Activated CD4-positive, alpha-beta memory T cell treated with anti-CD3 and anti-CD28 coated beads, Interleukin-2, amount 10 ng/mL, durations not matched to agents 7 days and 5 days (primary cell): ENCODE measurements at regions of chr19 and their contacts with region 1.

Region 1: GRCh38 chr19:13774217-13775191 is at the start of gene C19orf53:
- DNase-seq: peak; percentile 91
- H3K4me3 Mint-ChIP-seq: peak within 1 kb of the TSS; percentile 97
- H3K27ac Mint-ChIP-seq: peak within 1 kb of the TSS; percentile 84
- H3K4me1 Mint-ChIP-seq: peaks cover 23% of the 10 kb centered on the region
- H3K27me3 Mint-ChIP-seq: no peaks in the 10 kb centered on the region
- total RNA-seq, gene C19orf53: 79.4 to 83.7 TPM

Region 2: GRCh38 chr19:13689085-13689484 is 85.4 kb before region 1 on chr19:
- CTCF ChIA-PET with region 1: no interaction called
- POLR2A ChIA-PET with region 1: no interaction called
- DNase-seq: peak; percentile 16
- H3K4me3 Mint-ChIP-seq: no peak overlapping the region
- H3K27ac Mint-ChIP-seq: no peak overlapping the region
- H3K4me1 Mint-ChIP-seq: no peaks in the 10 kb centered on the region
- H3K27me3 Mint-ChIP-seq: peaks cover 3% of the 10 kb centered on the region

Region 3: DNA sequence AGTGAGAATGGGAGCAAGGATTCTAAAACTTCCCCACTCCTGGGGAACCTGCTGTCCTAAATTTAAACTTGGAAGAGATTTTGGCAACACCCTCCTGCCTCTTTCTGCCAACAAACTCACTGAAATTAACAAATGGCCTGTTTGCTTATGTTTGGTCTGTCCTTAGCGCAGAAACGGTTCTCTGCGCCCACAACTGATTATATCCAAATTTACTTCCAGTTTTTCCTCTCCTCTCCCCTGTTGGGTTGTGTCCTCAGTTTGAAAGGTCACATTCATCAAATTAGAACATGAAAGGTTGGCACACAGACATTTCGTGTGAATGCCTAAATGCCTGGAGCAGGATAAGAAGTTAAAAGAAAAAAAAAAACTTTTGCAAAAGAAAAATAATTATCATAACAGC is 66.6 kb before region 1 on chr19:
- CTCF ChIA-PET with region 1: no interaction called
- POLR2A ChIA-PET with region 1: no interaction called
- DNase-seq: no peak
- H3K4me3 Mint-ChIP-seq: no peak overlapping the region
- H3K27ac Mint-ChIP-seq: no peak overlapping the region
- H3K4me1 Mint-ChIP-seq: no peaks in the 10 kb centered on the region
- H3K27me3 Mint-ChIP-seq: peaks cover 2% of the 10 kb centered on the region

Region 4: GRCh38 chr19:13718733-13719132 is 55.8 kb before region 1 on chr19:
- CTCF ChIA-PET with region 1: no interaction called
- POLR2A ChIA-PET with region 1: no interaction called
- DNase-seq: no peak
- H3K4me3 Mint-ChIP-seq: no peak overlapping the region
- H3K27ac Mint-ChIP-seq: no peak overlapping the region
- H3K4me1 Mint-ChIP-seq: no peaks in the 10 kb centered on the region
- H3K27me3 Mint-ChIP-seq: peaks cover 10% of the 10 kb centered on the region

Region 5: DNA sequence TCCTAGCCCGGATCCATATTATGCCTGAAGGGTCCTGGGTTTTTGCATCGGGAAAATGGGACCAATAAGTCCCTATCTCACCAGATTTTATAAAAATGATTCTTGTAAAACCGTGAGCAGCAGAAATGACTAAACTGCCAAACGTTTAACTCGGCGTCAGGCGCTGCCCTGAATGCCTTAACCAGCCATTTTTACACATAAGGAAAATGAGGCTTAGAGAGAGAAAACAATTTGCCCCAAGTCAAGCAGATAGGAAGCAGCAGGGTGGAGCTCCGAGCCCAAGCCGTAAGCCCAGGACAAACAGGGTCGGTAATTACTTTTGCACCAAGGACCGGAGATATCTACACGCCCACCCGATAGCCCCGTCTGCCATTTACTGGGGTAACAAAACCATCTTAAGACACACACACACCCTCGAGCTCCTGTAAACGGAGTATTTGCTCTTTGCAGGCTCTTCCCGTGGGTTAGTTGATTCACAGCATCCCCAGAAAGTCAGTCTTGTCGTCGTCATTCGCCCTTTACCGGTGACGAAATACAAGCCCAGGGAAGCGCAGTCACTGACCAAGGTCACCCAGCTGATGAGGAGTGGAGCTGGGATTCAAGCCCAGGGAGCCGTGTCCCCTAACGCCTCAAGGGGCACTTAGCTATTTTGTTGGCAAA is 26.2 kb before region 1 on chr19:
- CTCF ChIA-PET with region 1: interaction called, 6 read pairs
- POLR2A ChIA-PET with region 1: interaction called, 32 read pairs
- DNase-seq: peak; percentile 30
- H3K4me3 Mint-ChIP-seq: peak overlapping the region; percentile 86
- H3K27ac Mint-ChIP-seq: peak overlapping the region; percentile 75
- H3K4me1 Mint-ChIP-seq: peaks cover 28% of the 10 kb centered on the region
- H3K27me3 Mint-ChIP-seq: no peaks in the 10 kb centered on the region

Region 6: DNA sequence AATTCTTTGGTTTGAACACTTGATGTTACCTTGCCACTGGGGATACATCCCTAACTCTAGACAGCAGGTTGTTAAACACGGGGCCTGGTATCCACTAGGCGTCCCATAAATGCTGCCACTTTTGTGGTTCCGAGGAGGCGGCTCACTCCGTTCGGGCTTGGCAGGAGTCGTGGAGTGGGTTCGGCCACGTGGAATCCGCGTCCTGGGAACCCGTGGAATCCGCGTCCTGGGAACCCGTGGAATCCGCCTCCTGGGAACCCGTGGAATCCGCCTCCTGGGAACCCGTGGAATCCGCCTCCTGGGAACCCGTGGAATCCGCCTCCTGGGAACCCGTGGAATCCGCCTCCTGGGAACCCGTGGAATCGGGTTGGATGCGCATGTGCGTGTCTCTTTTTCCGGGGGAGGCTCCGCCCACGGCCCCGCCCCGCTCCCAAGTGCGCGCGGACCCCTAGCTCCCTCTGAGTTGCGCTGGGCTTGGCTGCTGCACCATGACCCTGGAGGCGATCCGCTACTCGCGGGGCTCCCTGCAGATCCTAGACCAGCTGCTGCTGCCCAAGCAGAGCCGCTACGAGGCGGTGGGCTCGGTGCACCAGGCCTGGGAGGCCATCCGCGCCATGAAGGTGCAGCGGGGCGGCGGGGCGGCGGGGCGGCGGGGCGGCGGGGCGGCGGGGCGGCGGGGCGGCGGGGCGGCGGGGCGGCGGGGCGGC is 10.2 kb before region 1 on chr19 and contains the start of gene MRI1:
- CTCF ChIA-PET with region 1: interaction called, 5 read pairs
- POLR2A ChIA-PET with region 1: interaction called, 18 read pairs
- DNase-seq: peak; percentile 44
- H3K4me3 Mint-ChIP-seq: peak within 1 kb of the TSS; percentile 78
- H3K27ac Mint-ChIP-seq: no peak within 1 kb of the TSS
- H3K4me1 Mint-ChIP-seq: peaks cover 12% of the 10 kb centered on the region
- H3K27me3 Mint-ChIP-seq: no peaks in the 10 kb centered on the region
- total RNA-seq, gene MRI1: 22.4 to 22.7 TPM

Region 7: DNA sequence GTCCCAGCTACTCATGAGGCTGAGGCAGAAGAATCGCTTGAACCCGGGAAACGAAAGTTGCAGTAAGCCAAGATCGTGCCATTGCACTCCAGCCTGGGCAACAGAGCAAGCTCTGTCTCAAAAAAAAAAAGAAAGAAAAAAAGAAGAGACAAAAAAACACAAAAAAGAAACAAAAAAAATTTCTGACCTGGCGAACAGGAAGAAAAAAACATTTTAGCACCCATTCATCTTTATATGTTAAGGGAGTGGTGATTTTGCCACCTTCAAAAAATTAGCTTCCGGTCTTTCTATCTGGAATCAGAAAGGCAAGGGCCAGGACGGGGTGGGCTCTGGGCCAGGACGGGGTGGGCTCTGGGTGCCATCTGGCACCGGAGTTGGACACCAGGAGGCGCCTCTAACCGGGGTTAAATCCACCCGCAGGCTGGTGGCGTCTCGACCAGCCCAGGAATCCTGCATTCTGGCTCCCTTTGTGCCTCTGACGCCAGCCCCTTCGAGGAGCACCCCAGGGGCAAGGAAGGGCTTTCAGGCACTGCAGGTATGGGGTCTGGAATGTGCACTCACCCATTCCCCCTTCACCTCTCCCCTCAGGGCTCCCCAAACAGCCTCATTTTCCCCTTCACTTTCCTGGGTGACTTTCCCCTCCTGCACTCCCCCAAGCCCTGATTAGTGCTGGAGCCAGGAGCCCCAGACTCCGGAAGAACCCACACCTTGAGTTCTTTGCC is 10.4 kb after region 1 on chr19:
- CTCF ChIA-PET with region 1: interaction called, 12 read pairs
- POLR2A ChIA-PET with region 1: interaction called, 35 read pairs
- DNase-seq: peak; percentile 77
- H3K4me3 Mint-ChIP-seq: peak overlapping the region; percentile 25
- H3K27ac Mint-ChIP-seq: peak overlapping the region; percentile 56
- H3K4me1 Mint-ChIP-seq: peaks cover 47% of the 10 kb centered on the region
- H3K27me3 Mint-ChIP-seq: no peaks in the 10 kb centered on the region

Region 8: GRCh38 chr19:13794757-13795589 is 20.5 kb after region 1 on chr19 and contains the start of gene ZSWIM4:
- CTCF ChIA-PET with region 1: interaction called, 3 read pairs
- POLR2A ChIA-PET with region 1: interaction called, 35 read pairs
- DNase-seq: peak; percentile 98
- H3K4me3 Mint-ChIP-seq: peak within 1 kb of the TSS; percentile 99
- H3K27ac Mint-ChIP-seq: peak within 1 kb of the TSS; percentile 93
- H3K4me1 Mint-ChIP-seq: peaks cover 35% of the 10 kb centered on the region
- H3K27me3 Mint-ChIP-seq: no peaks in the 10 kb centered on the region
- total RNA-seq, gene ZSWIM4: 10.1 to 10.4 TPM

Region 9: DNA sequence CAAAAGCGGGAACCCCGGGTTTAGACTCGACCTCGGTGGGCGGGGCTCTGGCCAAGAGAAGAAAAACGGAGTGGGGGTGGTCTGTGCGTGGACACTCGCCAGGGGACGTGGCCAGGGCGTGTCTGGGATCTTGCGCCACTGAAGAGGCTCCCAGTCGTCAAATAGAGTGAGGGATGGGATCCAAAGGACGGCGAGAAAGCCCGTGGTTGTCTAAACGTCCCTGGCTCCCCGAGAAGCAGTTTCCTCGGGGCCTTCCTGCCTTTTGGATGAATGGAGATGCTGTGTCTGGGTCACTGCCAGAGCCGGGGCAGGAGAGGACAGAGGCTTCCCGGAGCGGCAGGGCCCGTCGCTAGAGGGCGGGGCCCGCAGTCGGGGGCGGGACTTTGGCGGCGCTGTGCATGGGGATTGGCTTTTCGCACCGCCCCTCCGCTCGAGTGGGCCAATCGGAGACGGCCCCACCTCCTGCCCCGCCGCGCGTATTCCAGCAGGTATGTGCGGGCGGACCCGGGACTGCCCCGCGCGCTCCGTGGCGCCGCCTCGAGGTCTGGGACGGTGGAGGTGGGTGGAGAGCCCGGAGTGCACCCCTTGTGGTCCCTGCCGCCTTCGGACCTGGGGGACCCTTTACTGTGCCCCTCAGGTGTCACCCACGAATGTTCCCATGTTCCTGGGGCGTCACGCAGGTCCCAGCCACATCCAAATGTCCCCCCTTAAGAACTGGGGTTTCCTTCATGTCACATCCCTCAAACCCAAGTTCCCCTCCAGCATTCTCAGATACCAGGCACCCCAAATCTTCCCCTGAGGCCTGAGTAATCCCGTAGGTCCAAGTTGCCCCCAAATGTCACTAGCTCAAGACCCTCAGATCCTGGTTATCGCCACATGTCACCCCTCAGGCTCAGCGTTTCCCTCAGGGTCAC is 59.1 kb after region 1 on chr19:
- CTCF ChIA-PET with region 1: interaction called, 3 read pairs
- POLR2A ChIA-PET with region 1: interaction called, 21 read pairs
- DNase-seq: peak; percentile 94
- H3K4me3 Mint-ChIP-seq: peak overlapping the region; percentile 74
- H3K27ac Mint-ChIP-seq: peak overlapping the region; percentile 70
- H3K4me1 Mint-ChIP-seq: peaks cover 47% of the 10 kb centered on the region
- H3K27me3 Mint-ChIP-seq: no peaks in the 10 kb centered on the region

Region 10: DNA sequence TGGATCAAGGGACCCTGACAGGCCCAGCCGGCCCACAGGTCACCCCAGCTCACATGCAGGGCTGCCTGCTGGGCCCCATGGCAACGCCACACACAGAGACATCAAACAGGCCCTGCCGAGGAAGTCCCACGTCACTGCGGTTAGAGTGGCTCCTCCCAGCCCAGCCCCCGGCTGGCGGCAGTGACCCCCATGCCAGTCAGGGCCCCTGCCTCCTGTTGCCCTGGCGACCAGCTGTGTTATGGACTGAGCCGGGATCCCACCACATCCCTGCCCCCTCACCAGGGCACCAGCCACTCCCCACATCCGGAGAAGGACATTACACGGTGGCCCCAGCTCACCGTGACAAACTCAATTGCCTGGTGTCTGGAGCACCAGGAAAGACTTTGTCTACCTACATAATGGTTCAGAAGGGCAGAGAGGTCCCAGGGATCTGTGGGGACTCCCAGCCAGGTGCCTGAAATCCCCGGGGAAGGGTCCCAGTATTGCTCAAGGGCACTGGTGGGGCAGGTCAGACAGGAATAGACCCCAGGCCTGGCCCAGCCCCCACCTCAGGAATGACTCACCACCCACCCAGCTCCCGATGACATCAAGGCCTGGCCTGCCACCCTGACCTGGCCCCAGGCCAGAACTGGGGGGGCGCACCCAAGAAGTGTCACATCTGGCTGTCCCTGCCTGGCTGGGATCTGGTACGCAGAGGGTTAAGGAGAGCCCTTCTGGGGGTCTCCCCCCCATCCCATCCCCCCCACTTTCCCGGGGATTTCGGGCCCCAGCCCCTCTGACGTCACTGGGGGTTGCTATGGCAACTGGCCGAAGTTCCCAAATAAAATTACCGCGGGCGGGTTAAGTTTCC is 72.3 kb after region 1 on chr19:
- CTCF ChIA-PET with region 1: interaction called, 3 read pairs
- POLR2A ChIA-PET with region 1: interaction called, 17 read pairs
- DNase-seq: peak; percentile 96
- H3K4me3 Mint-ChIP-seq: peak overlapping the region; percentile 80
- H3K27ac Mint-ChIP-seq: peak overlapping the region; percentile 99
- H3K4me1 Mint-ChIP-seq: peaks cover 59% of the 10 kb centered on the region
- H3K27me3 Mint-ChIP-seq: no peaks in the 10 kb centered on the region

Region 11: DNA sequence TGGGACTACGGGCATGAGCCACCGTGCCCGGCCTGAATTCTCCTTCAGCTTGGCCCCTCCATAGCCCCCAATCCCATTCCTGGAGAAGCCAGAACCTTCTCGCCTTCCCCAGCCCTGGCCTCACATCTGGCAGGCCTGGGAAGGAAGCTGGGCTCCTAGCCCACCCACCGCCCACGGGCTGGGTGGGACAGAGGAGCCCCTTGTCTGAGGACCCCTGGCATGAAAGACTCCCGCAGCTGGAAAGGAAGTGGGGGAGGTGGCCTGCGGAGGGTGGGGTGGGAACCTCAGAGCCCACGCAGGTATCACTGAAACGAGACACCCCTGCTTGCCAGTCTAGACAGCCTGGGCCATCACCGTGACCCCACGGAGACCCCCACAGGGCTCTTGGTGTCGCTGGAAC is 94.8 kb after region 1 on chr19:
- CTCF ChIA-PET with region 1: no interaction called
- POLR2A ChIA-PET with region 1: no interaction called
- DNase-seq: no peak
- H3K4me3 Mint-ChIP-seq: no peak overlapping the region
- H3K27ac Mint-ChIP-seq: no peak overlapping the region
- H3K4me1 Mint-ChIP-seq: peaks cover 13% of the 10 kb centered on the region
- H3K27me3 Mint-ChIP-seq: peaks cover 25% of the 10 kb centered on the region